ENCODE measurements at regions of chr7 and their contacts with region 1.

Region 1: GRCh38 chr7:2757904-2758672 is 70.1 kb downstream of the AMZ1 start:
- DNase-seq: peak; percentile 63
- H3K4me3 Mint-ChIP-seq: peak overlapping the region; percentile 71
- H3K27ac Mint-ChIP-seq: peak overlapping the region; percentile 97
- H3K4me1 Mint-ChIP-seq: peaks cover 50% of the 10 kb centered on the region
- H3K27me3 Mint-ChIP-seq: no peaks in the 10 kb centered on the region

Region 2: GRCh38 chr7:2720582-2721491 is 37.3 kb before region 1 on chr7:
- intact Hi-C with region 1: loop called (anchors 1 kb)
- DNase-seq: peak; percentile 60
- H3K4me3 Mint-ChIP-seq: no peak overlapping the region
- H3K27ac Mint-ChIP-seq: peak overlapping the region; percentile 42
- H3K4me1 Mint-ChIP-seq: peaks cover 43% of the 10 kb centered on the region
- H3K27me3 Mint-ChIP-seq: no peaks in the 10 kb centered on the region

Region 3: GRCh38 chr7:2844165-2844898 is 86.2 kb after region 1 on chr7 and contains the start of gene GNA12:
- intact Hi-C with region 1: loop called (anchors 5 kb)
- DNase-seq: peak; percentile 99
- H3K4me3 Mint-ChIP-seq: peak within 1 kb of the TSS; percentile 83
- H3K27ac Mint-ChIP-seq: peak within 1 kb of the TSS; percentile 68
- H3K4me1 Mint-ChIP-seq: peaks cover 25% of the 10 kb centered on the region
- H3K27me3 Mint-ChIP-seq: no peaks in the 10 kb centered on the region
- total RNA-seq, gene GNA12: 40.9 and 41.4 TPM in 2 replicates

Measured in activated T-helper 2 cell treated with anti-CD3 and anti-CD28 coated beads, Interferon-gamma antibody, Interleukin-2, Interleukin-4, amounts not matched to agents 10 μg/mL and 5 μg/mL and 100 μg/mL, durations not matched to agents 14 hours and 24 hours and 36 hours (primary cell).